PC-3 (cell line): ENCODE measurements at regions of chrX and their contacts with region 1.

Region 1: GRCh38 chrX:130772105-130772775 is 130.8 kb downstream of the ENOX2 start:
- DNase-seq: peak; percentile 82
- ATAC-seq: peak; percentile 71
- H3K4me3 ChIP-seq: peak overlapping the region; percentile 23; the same call in 1 of the 2 replicates
- H3K27ac ChIP-seq: peak overlapping the region; percentile 98
- H3K4me1 ChIP-seq: peaks cover 40% of the 10 kb centered on the region
- H3K27me3 ChIP-seq: no peaks in the 10 kb centered on the region
- CTCF ChIP-seq: no peak

Region 2: GRCh38 chrX:130575831-130576389 is 196.3 kb before region 1 on chrX:
- CTCF ChIA-PET with region 1: interaction called, 5 read pairs
- POLR2A ChIA-PET with region 1: no interaction called
- intact Hi-C with region 1: loop called (anchors 1 kb)
- DNase-seq: peak; percentile 56
- ATAC-seq: peak; percentile 66
- H3K4me3 ChIP-seq: no peak overlapping the region
- H3K27ac ChIP-seq: no peak overlapping the region
- H3K4me1 ChIP-seq: peaks cover 12% of the 10 kb centered on the region
- H3K27me3 ChIP-seq: no peaks in the 10 kb centered on the region
- CTCF ChIP-seq: peak; percentile 82

Region 3: DNA sequence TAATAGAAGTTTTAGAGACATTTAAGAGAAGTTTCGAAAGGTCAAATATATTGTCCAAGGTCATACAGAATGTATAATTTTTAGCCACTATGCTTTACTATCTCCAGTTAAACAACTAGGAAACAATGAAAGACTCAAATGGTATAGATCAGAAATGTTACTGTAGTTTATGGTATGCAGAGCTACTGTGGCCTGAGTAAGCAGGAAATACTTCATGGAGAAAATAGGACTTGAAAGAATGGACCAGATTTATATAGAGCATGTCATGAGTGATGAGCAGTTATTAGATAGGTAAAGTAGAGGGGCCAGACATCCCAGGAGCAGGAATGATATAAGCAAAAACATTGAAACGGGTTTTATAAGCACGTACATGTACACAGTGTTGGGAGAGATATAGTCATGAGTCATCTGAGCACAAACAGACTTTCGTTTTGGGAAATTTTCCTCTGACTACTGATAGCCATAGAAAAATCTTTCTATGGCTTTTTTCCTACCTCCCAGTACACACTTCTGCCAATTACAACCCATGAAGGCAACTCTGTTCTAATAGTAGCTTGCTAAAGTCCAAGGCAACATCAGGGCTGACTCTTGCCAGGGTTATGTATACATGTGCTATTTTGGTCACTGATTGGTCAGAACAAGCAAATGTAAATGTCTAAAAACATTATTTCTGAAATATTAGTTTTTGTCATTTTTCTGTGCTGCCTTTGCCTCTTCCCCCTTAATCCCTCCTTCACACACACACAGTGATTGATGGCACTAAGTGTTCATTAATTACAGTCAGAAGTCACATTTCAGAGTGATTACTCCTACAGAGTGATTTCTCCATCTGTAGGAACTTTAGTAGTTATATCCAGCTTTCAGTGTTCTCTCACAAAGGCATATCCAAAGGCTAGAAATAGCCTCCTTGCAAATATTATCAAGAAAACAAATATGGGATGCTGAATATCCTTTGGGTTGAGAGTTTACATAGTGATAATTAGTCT is 67.9 kb before region 1 on chrX:
- CTCF ChIA-PET with region 1: no interaction called
- POLR2A ChIA-PET with region 1: no interaction called
- intact Hi-C with region 1: loop called (anchors 1 kb)
- DNase-seq: peak; percentile 66
- ATAC-seq: peak; percentile 94
- H3K4me3 ChIP-seq: peak overlapping the region; percentile 21; the same call in 1 of the 2 replicates
- H3K27ac ChIP-seq: peak overlapping the region; percentile 58
- H3K4me1 ChIP-seq: peaks cover 27% of the 10 kb centered on the region
- H3K27me3 ChIP-seq: no peaks in the 10 kb centered on the region
- CTCF ChIP-seq: no peak

Region 4: GRCh38 chrX:130716781-130717413 is 55.3 kb before region 1 on chrX:
- CTCF ChIA-PET with region 1: no interaction called
- POLR2A ChIA-PET with region 1: no interaction called
- intact Hi-C with region 1: loop called (anchors 5 kb)
- DNase-seq: peak; percentile 25
- ATAC-seq: peak; percentile 57
- H3K4me3 ChIP-seq: no peak overlapping the region
- H3K27ac ChIP-seq: peak overlapping the region; percentile 6; the same call in 1 of the 2 replicates
- H3K4me1 ChIP-seq: peaks cover 40% of the 10 kb centered on the region
- H3K27me3 ChIP-seq: no peaks in the 10 kb centered on the region
- CTCF ChIP-seq: no peak

Region 5: GRCh38 chrX:130836447-130836846 is 64.2 kb after region 1 on chrX:
- CTCF ChIA-PET with region 1: no interaction called
- POLR2A ChIA-PET with region 1: no interaction called
- intact Hi-C with region 1: no loop called
- DNase-seq: no peak
- ATAC-seq: no peak
- H3K4me3 ChIP-seq: no peak overlapping the region
- H3K27ac ChIP-seq: no peak overlapping the region
- H3K4me1 ChIP-seq: no peaks in the 10 kb centered on the region
- H3K27me3 ChIP-seq: no peaks in the 10 kb centered on the region
- CTCF ChIP-seq: no peak

Region 6: DNA sequence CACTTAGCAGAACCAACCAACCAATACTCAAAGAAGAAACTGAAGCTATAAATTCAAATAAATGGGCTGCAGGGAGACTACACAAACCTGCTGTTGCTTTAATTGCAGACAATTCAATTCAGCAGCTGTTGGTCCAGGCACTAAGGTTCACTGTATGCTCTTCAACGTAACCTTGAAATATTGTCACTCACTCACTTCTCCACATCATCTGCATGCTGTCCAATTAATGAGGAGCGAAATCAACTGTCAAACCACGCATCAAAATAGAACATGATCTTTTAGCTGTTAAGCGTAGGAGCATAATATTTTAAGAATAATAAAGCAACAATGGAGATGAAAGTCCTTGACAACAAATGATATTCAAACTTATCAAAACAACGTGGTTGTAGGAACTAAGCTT is 113.8 kb after region 1 on chrX:
- CTCF ChIA-PET with region 1: no interaction called
- POLR2A ChIA-PET with region 1: no interaction called
- intact Hi-C with region 1: loop called (anchors 2 kb)
- DNase-seq: no peak
- ATAC-seq: no peak; the same call in 1 of the 2 replicates
- H3K4me3 ChIP-seq: no peak overlapping the region
- H3K27ac ChIP-seq: peak overlapping the region; percentile 59
- H3K4me1 ChIP-seq: peaks cover 18% of the 10 kb centered on the region
- H3K27me3 ChIP-seq: no peaks in the 10 kb centered on the region
- CTCF ChIP-seq: no peak